ENCODE measurements at regions of chr5 and their contacts with region 1.

Region 1: GRCh38 chr5:145056805-145057204 is 778.3 kb downstream of the PRELID2 start:
- DNase-seq: no peak
- H3K4me3 ChIP-seq: no peak overlapping the region
- H3K27ac ChIP-seq: no peak overlapping the region
- H3K4me1 ChIP-seq: no peaks in the 10 kb centered on the region
- H3K27me3 ChIP-seq: no peaks in the 10 kb centered on the region
- CTCF ChIP-seq: no peak
- EP300 ChIP-seq: no peak
- POLR2A ChIP-seq: no peak

Region 2: DNA sequence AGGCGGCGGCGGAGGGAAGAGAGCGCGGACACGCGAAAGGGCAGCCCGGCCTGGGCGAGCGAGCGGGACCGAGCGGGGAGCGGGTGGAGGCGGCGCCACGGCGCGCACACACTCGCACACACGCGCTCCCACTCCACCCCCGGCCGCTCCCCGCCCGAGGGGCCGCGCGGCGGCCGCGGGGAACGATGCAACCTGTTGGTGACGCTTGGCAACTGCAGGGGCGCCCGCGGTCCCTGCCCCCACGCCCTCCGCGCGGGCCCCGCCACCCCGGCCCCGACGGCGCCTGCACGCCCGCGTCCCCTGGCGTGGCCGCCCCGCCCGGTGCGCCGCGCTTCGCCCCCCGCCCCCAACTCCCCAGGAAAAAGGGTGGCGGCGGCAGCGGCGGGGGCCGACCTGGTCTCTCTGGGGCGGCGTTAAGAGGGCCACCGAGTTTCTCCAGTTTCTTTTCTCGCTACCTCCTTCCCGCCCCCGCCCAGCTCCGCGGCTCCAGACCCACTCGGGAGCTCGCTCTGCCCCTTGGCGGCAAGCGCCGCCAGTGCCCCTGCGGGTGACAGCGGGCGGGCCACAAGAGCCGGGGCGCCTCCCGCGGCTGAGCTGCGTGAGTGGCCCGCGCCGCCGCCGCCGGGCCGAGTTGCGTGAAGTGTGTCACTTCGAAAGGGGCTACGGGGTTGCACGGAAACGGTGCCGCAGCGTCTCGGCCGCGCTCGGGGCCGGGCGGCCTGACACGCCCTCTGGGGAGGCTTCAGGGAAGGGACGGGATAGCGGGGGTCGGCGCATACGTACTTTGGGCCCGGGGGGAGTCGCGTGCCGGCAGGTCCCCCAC is 1653.0 kb before region 1 on chr5 and contains the start of gene NR3C1:
- in situ Hi-C with region 1: no loop called
- intact Hi-C with region 1: no loop called
- DNase-seq: peak; percentile 88
- H3K4me3 ChIP-seq: peak within 1 kb of the TSS; percentile 64 to 90 (median 86)
- H3K27ac ChIP-seq: peak within 1 kb of the TSS; percentile 96 to 99 (median 98)
- H3K4me1 ChIP-seq: peaks cover 0 to 33% (median 12%) of the 10 kb centered on the region in 4 donors
- H3K27me3 ChIP-seq: peaks cover 3% of the 10 kb centered on the region
- CTCF ChIP-seq: peak in 4 of 5 experiments; percentile 39 to 61 (median 52)
- EP300 ChIP-seq: no peak
- POLR2A ChIP-seq: peak; percentile 56
- total RNA-seq, gene NR3C1: 8.4 to 37.7 (median 30.3) TPM

Region 3: GRCh38 chr5:144979516-144980264 is 77.1 kb before region 1 on chr5:
- in situ Hi-C with region 1: no loop called
- intact Hi-C with region 1: no loop called
- DNase-seq: no peak
- H3K4me3 ChIP-seq: no peak overlapping the region
- H3K27ac ChIP-seq: no peak overlapping the region
- H3K4me1 ChIP-seq: no peaks in the 10 kb centered on the region
- H3K27me3 ChIP-seq: no peaks in the 10 kb centered on the region
- CTCF ChIP-seq: no peak
- EP300 ChIP-seq: no peak
- POLR2A ChIP-seq: no peak

Region 4: DNA sequence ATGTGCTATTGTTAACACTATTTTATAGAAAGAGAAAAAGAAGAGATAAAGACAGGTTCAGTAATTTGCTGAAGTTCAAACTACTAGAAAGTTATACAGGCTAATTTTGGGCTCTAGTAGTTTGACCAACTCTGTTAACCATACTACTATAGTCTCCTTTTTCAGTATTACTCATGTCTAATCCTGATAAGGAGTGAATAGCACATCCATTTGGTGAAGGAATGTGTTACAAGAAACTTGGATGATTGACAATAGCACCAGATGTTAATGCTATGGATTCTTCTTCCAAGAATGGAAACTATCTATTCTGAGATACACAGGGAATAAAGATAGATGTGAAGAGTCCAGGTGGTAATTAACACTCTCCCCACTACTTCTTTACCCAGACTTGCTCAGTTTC is 101.0 kb after region 1 on chr5:
- in situ Hi-C with region 1: no loop called
- intact Hi-C with region 1: no loop called
- DNase-seq: no peak
- H3K4me3 ChIP-seq: no peak overlapping the region
- H3K27ac ChIP-seq: no peak overlapping the region
- H3K4me1 ChIP-seq: no peaks in the 10 kb centered on the region
- H3K27me3 ChIP-seq: no peaks in the 10 kb centered on the region
- CTCF ChIP-seq: no peak
- EP300 ChIP-seq: no peak
- POLR2A ChIP-seq: no peak

Region 5: DNA sequence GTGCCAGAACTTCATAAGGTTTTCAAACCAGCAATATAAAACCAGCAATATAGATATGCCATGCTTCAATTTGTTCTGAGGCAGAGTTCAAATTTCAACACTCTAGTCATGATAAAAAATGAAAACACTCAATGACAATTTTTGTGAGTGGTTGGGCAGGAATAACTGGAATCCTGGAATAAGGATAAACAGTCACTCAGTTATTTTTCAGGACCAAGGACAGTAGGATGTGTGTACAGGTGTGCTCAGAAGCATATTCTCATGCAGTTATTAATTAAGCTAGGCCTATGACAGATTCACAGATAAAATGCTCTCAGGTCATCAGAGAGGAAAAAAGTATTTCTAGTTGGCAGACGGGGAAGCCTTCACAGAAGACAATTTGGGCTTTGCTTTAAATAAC is 1939.1 kb after region 1 on chr5:
- in situ Hi-C with region 1: no loop called
- intact Hi-C with region 1: loop called (anchors 5 kb)
- DNase-seq: no peak
- H3K4me3 ChIP-seq: no peak overlapping the region
- H3K27ac ChIP-seq: no peak overlapping the region
- H3K4me1 ChIP-seq: no peaks in the 10 kb centered on the region
- H3K27me3 ChIP-seq: no peaks in the 10 kb centered on the region
- CTCF ChIP-seq: no peak
- EP300 ChIP-seq: no peak
- POLR2A ChIP-seq: no peak